GM12878 (cell line): ENCODE measurements at regions of chr7 and their contacts with region 1.

Region 1: GRCh38 chr7:45917658-45918057 is 3.4 kb downstream of the IGFBP3 start:
- DNase-seq: no peak
- ATAC-seq: peak; percentile 81
- H3K4me3 ChIP-seq: no peak overlapping the region
- H3K27ac ChIP-seq: no peak overlapping the region
- H3K4me1 ChIP-seq: no peaks in the 10 kb centered on the region
- H3K27me3 ChIP-seq: peaks cover 2 to 3% of the 10 kb centered on the region in 2 experiments; a peak in 3 of 4 replicates
- CTCF ChIP-seq: peak; percentile 87 to 93 (median 89); a peak in 5 of 6 replicates
- EP300 ChIP-seq: no peak
- POLR2A ChIP-seq: no peak
- RAD21 ChIP-seq: peak; percentile 84

Region 2: DNA sequence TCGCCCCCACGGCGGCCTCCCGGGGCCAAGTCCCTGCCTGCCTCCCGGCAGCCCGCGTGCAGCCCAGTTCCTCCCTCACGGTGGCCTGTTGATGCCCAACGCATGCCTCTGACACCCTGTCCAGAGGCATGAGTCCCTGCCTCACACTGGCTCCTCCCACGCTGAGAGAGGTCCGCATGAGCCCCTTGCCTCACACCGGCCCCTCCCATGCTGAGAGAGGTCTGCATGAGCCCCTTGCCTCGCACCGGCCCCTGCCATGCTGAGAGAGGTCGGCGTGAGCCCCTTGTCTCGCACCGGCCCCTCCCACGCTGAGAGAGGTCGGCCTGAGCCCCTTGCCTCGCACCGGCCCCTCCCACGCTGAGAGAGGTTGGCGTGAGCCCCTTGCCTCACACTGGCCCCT is 104.7 kb before region 1 on chr7:
- CTCF ChIA-PET with region 1: no interaction called
- POLR2A ChIA-PET with region 1: no interaction called
- RAD21 ChIA-PET with region 1: no interaction called
- SMC1A ChIA-PET with region 1: no interaction called
- in situ Hi-C with region 1: no loop called
- intact Hi-C with region 1: no loop called
- DNase-seq: no peak
- ATAC-seq: no peak
- H3K4me3 ChIP-seq: no peak overlapping the region
- H3K27ac ChIP-seq: no peak overlapping the region
- H3K4me1 ChIP-seq: no peaks in the 10 kb centered on the region
- H3K27me3 ChIP-seq: no peaks in the 10 kb centered on the region
- CTCF ChIP-seq: no peak
- EP300 ChIP-seq: no peak
- POLR2A ChIP-seq: no peak
- RAD21 ChIP-seq: no peak

Region 3: DNA sequence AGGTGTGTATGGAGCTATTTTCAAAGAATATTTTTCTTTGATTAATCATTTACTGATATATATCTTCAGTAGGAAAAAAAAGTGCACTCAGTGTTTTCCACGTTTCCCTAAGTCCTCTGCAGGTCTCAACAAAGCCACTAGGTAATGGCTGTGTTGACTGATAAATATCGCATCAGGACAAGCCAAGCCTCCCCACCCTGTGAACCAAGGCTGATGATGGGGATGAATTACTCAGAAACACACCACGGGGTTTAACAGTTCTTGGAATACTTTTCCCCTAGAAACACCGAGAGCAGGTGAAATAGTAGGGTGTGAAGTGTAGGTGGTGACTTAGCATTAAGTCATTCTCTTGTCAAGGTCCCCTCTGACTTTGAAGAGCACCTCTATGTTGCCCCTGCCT is 426.9 kb after region 1 on chr7:
- CTCF ChIA-PET with region 1: interaction called, 127 read pairs
- POLR2A ChIA-PET with region 1: no interaction called
- RAD21 ChIA-PET with region 1: interaction called, 97 read pairs
- SMC1A ChIA-PET with region 1: interaction called, 130 read pairs
- in situ Hi-C with region 1: no loop called
- intact Hi-C with region 1: no loop called
- DNase-seq: no peak
- ATAC-seq: no peak
- H3K4me3 ChIP-seq: no peak overlapping the region
- H3K27ac ChIP-seq: no peak overlapping the region
- H3K4me1 ChIP-seq: no peaks in the 10 kb centered on the region
- H3K27me3 ChIP-seq: no peaks in the 10 kb centered on the region
- CTCF ChIP-seq: no peak
- EP300 ChIP-seq: no peak
- POLR2A ChIP-seq: no peak
- RAD21 ChIP-seq: no peak

Region 4: DNA sequence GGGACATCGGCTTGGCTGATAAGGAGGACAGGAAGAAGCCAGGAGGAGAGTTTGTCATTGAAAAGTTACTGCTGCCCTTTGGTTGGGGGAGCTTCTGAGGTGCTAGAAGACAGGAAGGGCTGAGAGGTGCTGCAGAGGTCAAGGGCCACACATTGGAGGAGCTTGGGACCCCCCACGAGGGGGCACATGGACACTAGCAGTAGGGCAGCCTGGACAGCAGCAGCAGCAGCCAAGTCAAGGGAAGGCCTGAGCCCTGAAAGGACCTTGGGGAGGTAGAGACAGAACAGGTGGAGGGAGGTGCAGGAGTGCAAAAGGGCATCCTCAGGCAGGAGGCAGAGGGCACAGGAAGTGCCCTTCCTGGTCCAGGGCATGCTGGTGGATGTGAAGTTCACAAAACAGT is 443.2 kb after region 1 on chr7:
- CTCF ChIA-PET with region 1: interaction called, 57 read pairs
- POLR2A ChIA-PET with region 1: no interaction called
- RAD21 ChIA-PET with region 1: interaction called, 46 read pairs
- SMC1A ChIA-PET with region 1: interaction called, 55 read pairs
- in situ Hi-C with region 1: no loop called
- intact Hi-C with region 1: no loop called
- DNase-seq: no peak
- ATAC-seq: no peak; the same call in 2 of the 3 replicates
- H3K4me3 ChIP-seq: no peak overlapping the region
- H3K27ac ChIP-seq: no peak overlapping the region
- H3K4me1 ChIP-seq: no peaks in the 10 kb centered on the region
- H3K27me3 ChIP-seq: no peaks in the 10 kb centered on the region
- CTCF ChIP-seq: peak in 1 of 3 experiments; percentile 14; a peak in 1 of 6 replicates
- EP300 ChIP-seq: no peak
- POLR2A ChIP-seq: no peak
- RAD21 ChIP-seq: peak; percentile 24; the same call in 1 of the 2 replicates

Region 5: GRCh38 chr7:47080816-47081215 is 1163.2 kb after region 1 on chr7:
- CTCF ChIA-PET with region 1: interaction called, 91 read pairs
- POLR2A ChIA-PET with region 1: no interaction called
- RAD21 ChIA-PET with region 1: interaction called, 41 read pairs
- SMC1A ChIA-PET with region 1: interaction called, 5 read pairs
- in situ Hi-C with region 1: loop called (anchors 5 kb)
- intact Hi-C with region 1: no loop called
- DNase-seq: no peak
- ATAC-seq: no peak
- H3K4me3 ChIP-seq: no peak overlapping the region
- H3K27ac ChIP-seq: no peak overlapping the region
- H3K4me1 ChIP-seq: no peaks in the 10 kb centered on the region
- H3K27me3 ChIP-seq: no peaks in the 10 kb centered on the region
- CTCF ChIP-seq: no peak
- EP300 ChIP-seq: no peak
- POLR2A ChIP-seq: no peak
- RAD21 ChIP-seq: no peak

Region 6: DNA sequence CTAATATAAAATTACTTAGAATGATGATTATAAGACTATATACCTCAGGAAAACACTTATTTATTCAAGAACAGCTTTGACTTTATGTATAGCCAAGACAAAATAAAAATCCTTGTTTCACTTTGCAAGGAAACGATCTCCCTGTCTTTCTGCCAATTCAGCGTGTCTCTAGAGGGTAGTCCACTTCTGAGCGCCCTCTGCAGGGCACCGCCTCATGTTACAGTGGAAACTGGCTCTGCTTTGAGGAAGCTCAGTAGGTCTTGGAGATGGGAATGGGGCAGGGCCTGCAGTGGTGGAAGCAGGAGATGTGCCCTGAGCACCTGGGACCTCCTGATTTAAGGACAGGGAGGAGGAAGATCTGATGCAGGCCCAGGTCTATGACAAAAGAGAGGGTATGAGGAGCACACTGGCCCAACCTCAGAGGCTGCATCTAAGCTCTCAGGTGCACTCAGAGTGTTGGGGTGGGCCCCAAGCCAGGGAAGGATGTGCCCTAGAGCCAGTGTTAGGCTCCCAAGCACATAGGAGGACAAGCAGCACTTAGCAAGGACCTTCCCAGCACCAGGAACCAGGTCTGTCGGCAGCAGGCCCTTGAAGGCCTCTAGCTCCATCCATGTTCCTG is 1183.3 kb after region 1 on chr7:
- CTCF ChIA-PET with region 1: interaction called, 10 read pairs
- POLR2A ChIA-PET with region 1: no interaction called
- RAD21 ChIA-PET with region 1: interaction called, 7 read pairs
- SMC1A ChIA-PET with region 1: interaction called, 5 read pairs
- in situ Hi-C with region 1: no loop called
- intact Hi-C with region 1: no loop called
- DNase-seq: no peak
- ATAC-seq: no peak
- H3K4me3 ChIP-seq: no peak overlapping the region
- H3K27ac ChIP-seq: no peak overlapping the region
- H3K4me1 ChIP-seq: no peaks in the 10 kb centered on the region
- H3K27me3 ChIP-seq: no peaks in the 10 kb centered on the region
- CTCF ChIP-seq: peak; percentile 16 to 39 (median 28); a peak in 3 of 6 replicates
- EP300 ChIP-seq: no peak
- POLR2A ChIP-seq: no peak
- RAD21 ChIP-seq: no peak

Region 7: GRCh38 chr7:47179812-47180515 is 1262.3 kb after region 1 on chr7:
- CTCF ChIA-PET with region 1: interaction called, 24 read pairs
- POLR2A ChIA-PET with region 1: no interaction called
- RAD21 ChIA-PET with region 1: interaction called, 6 read pairs
- SMC1A ChIA-PET with region 1: interaction called, 5 read pairs
- in situ Hi-C with region 1: loop called (anchors 5 kb)
- intact Hi-C with region 1: loop called (anchors 2 kb)
- DNase-seq: no peak
- ATAC-seq: peak; percentile 87
- H3K4me3 ChIP-seq: no peak overlapping the region
- H3K27ac ChIP-seq: no peak overlapping the region
- H3K4me1 ChIP-seq: no peaks in the 10 kb centered on the region
- H3K27me3 ChIP-seq: no peaks in the 10 kb centered on the region
- CTCF ChIP-seq: peak; percentile 55 to 80 (median 58)
- EP300 ChIP-seq: no peak
- POLR2A ChIP-seq: no peak
- RAD21 ChIP-seq: peak; percentile 71

Region 8: GRCh38 chr7:47254081-47255006 is 1336.7 kb after region 1 on chr7:
- CTCF ChIA-PET with region 1: interaction called, 17 read pairs
- POLR2A ChIA-PET with region 1: no interaction called
- RAD21 ChIA-PET with region 1: interaction called, 8 read pairs
- SMC1A ChIA-PET with region 1: no interaction called
- in situ Hi-C with region 1: no loop called
- intact Hi-C with region 1: loop called (anchors 10 kb)
- DNase-seq: no peak
- ATAC-seq: peak; percentile 97
- H3K4me3 ChIP-seq: peak overlapping the region; percentile 27; the same call in 1 of the 2 replicates
- H3K27ac ChIP-seq: no peak overlapping the region
- H3K4me1 ChIP-seq: no peaks in the 10 kb centered on the region
- H3K27me3 ChIP-seq: peaks cover 0 to 4% of the 10 kb centered on the region in 2 experiments; a peak in 2 of 4 replicates
- CTCF ChIP-seq: peak; percentile 63 to 78 (median 65); a peak in 5 of 6 replicates
- EP300 ChIP-seq: no peak
- POLR2A ChIP-seq: no peak
- RAD21 ChIP-seq: peak; percentile 38